ENCODE measurements at regions of chr5 and their contacts with region 1.

Region 1: DNA sequence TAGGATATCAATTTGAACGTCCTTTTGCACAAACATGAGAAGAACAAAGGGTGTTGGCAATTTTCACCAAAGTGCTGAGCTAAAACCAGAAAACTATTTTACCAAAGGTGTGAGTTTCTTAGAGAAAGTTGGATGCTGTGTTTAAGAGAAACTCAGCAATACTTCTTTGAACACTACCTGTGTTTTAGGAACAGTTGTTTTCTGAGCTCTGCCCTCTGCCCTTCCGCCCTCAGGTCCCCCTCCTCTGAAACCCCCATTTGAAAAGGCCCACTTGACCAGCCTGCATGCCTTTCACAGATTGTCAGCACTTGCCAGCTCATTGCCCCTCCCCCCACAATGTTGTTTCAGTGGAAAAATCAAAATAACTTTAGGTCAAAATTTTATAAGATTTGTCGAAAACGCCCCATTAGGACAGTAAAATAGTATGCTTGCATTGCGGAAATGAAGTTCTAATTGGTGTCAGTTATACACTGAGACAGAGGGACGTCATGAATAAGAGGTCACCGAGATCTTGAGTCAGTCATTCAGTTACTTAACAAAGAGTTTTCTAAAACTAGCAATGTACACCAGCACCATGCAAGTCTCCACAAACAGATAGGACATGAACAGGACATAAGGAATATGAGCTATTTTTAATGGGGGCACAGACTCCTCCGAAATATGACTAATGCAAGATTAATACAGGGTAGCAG is 61.9 kb upstream of the IL7R start:
- DNase-seq: no peak
- ATAC-seq: no peak
- H3K4me3 ChIP-seq: no peak overlapping the region
- H3K4me3 Mint-ChIP-seq: peak overlapping the region; percentile 52
- H3K27ac ChIP-seq: peak overlapping the region in 1 of 2 donors; percentile 18
- H3K27ac Mint-ChIP-seq: peak overlapping the region; percentile 92
- H3K4me1 ChIP-seq: peaks cover 54% of the 10 kb centered on the region
- H3K4me1 Mint-ChIP-seq: peaks cover 91% of the 10 kb centered on the region
- H3K27me3 ChIP-seq: no peaks in the 10 kb centered on the region
- H3K27me3 Mint-ChIP-seq: no peaks in the 10 kb centered on the region
- CTCF ChIP-seq: no peak

Region 2: GRCh38 chr5:34695275-34696027 is 1099.4 kb before region 1 on chr5:
- CTCF ChIA-PET with region 1: no interaction called
- POLR2A ChIA-PET with region 1: no interaction called
- intact Hi-C with region 1: no loop called
- DNase-seq: peak in 2 of 14 experiments; percentile 11 to 16
- ATAC-seq: no peak
- H3K4me3 ChIP-seq: no peak overlapping the region
- H3K4me3 Mint-ChIP-seq: peak overlapping the region; percentile 34
- H3K27ac ChIP-seq: no peak overlapping the region
- H3K27ac Mint-ChIP-seq: no peak overlapping the region
- H3K4me1 ChIP-seq: peaks cover 13% of the 10 kb centered on the region
- H3K4me1 Mint-ChIP-seq: peaks cover 18% of the 10 kb centered on the region
- H3K27me3 ChIP-seq: no peaks in the 10 kb centered on the region
- H3K27me3 Mint-ChIP-seq: no peaks in the 10 kb centered on the region
- CTCF ChIP-seq: no peak

Region 3: GRCh38 chr5:35876921-35877320 is 82.1 kb after region 1 on chr5:
- CTCF ChIA-PET with region 1: no interaction called
- POLR2A ChIA-PET with region 1: interaction called, 11 read pairs
- intact Hi-C with region 1: no loop called
- DNase-seq: no peak
- ATAC-seq: no peak
- H3K4me3 ChIP-seq: no peak overlapping the region
- H3K4me3 Mint-ChIP-seq: peak overlapping the region; percentile 47
- H3K27ac ChIP-seq: peak overlapping the region in 1 of 2 donors; percentile 32
- H3K27ac Mint-ChIP-seq: peak overlapping the region; percentile 85
- H3K4me1 ChIP-seq: peaks cover 46% of the 10 kb centered on the region
- H3K4me1 Mint-ChIP-seq: peaks cover 95% of the 10 kb centered on the region
- H3K27me3 ChIP-seq: no peaks in the 10 kb centered on the region
- H3K27me3 Mint-ChIP-seq: no peaks in the 10 kb centered on the region
- CTCF ChIP-seq: no peak

Measured in CD4-positive, alpha-beta T cell (primary cell).